ENCODE measurements at regions of chr1 and their contacts with region 1.

Region 1: DNA sequence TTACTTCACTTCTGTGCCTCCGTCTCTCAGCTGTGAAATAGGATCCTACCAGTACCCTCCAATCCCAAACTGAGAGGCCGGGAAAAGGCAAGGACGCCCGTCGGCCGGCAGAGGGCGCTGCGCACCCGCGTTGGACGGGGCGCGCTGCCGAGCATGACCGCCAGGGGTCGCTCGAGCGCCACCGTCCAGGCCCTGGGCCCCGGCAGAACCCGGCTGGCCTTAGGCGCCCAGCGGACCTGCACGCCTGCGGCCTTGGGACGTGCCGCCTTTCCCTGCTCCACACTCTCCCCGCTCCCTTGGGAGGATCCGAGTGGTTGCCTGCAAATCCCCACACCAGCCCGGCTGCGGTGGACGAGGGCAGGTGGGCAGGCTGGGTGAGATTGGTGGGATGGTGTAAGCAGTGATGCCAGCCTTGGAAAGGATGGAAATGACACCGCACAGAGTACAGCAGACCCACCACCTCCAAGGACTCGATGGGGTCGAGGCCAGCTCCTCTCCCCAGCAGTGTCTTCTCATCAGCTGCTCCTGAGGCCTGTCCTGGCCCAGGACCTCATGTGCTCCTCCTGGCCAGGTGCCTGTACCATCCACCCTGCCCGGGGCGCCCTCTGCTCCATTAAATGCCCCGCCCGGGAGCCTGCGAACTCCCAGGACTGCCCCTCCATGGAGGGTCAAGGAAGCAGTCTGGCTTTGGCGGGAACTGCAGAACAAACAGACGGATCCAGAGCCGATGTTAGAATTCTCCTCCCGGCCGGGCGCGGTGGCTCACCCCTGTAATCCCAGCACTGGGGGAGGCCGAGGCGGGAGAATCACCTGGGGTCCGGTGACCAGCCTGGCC is 47.4 kb upstream of the LBR start:
- DNase-seq: peak; percentile 85
- ATAC-seq: peak; percentile 99
- H3K4me3 ChIP-seq: no peak overlapping the region
- H3K27ac ChIP-seq: no peak overlapping the region
- H3K4me1 ChIP-seq: no peaks in the 10 kb centered on the region
- H3K27me3 ChIP-seq: no peaks in the 10 kb centered on the region
- CTCF ChIP-seq: peak; percentile 100

Region 2: DNA sequence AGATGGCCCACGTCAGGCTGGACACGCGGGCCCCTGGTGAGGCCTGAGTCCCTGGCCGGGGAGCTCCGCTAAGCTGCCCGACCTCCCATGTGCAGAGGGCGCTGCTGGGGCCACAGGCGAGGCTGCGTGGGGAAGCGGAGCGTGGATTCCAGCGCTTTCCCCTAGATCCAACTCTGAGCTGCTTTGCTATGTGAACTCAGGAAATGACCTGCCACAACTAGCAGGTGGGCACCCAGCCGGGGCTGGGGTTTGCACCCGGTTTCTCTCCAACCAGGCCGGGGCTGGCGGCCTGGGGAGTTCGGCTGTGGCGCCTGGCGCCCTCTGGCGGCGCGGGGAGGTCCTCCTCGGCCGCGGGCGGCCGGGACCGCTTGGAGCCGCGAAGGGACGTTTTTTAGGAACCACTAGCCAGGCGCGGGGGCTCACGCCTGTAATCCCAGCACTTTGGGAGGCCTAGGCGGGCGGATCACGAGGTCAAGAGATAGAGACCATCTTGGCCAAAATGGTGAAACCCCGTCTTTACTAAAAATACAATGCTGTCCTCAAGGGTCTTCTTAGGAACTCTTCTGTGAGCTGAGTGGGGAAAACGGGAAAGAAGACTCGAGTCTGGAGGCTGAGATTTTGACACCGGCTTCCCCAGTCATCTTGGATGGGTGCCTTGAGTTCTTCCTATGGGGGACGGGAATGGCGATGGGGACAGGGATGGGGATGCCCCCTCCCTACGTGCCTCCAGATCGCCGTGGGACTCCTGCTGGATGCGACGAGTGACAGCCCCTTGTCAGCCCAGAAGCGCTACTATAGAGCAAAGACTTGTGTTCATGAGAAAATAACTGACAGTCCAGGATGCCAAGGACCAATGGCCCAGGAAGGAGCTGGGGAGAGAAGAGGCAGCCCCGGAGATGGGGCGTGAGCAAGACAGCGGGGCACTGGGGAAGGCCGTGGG is 436.3 kb after region 1 on chr1:
- intact Hi-C with region 1: loop called (anchors 5 kb)
- DNase-seq: peak; percentile 88
- ATAC-seq: peak; percentile 91
- H3K4me3 ChIP-seq: no peak overlapping the region
- H3K27ac ChIP-seq: no peak overlapping the region
- H3K4me1 ChIP-seq: no peaks in the 10 kb centered on the region
- H3K27me3 ChIP-seq: no peaks in the 10 kb centered on the region
- CTCF ChIP-seq: peak; percentile 96

Region 3: GRCh38 chr1:225977937-225978748 is 502.9 kb after region 1 on chr1:
- intact Hi-C with region 1: loop called (anchors 5 kb)
- DNase-seq: no peak
- ATAC-seq: no peak
- H3K4me3 ChIP-seq: no peak overlapping the region
- H3K27ac ChIP-seq: no peak overlapping the region
- H3K4me1 ChIP-seq: no peaks in the 10 kb centered on the region
- H3K27me3 ChIP-seq: no peaks in the 10 kb centered on the region
- CTCF ChIP-seq: no peak

Measured in upper lobe of right lung (tissue), 1 donor.